Activated CD8-positive, alpha-beta memory T cell treated with anti-CD3 and anti-CD28 coated beads, Interleukin-2, amount 10 ng/mL, durations not matched to agents 7 days and 5 days (primary cell): ENCODE measurements at regions of chr1 and their contacts with region 1.

Region 1: DNA sequence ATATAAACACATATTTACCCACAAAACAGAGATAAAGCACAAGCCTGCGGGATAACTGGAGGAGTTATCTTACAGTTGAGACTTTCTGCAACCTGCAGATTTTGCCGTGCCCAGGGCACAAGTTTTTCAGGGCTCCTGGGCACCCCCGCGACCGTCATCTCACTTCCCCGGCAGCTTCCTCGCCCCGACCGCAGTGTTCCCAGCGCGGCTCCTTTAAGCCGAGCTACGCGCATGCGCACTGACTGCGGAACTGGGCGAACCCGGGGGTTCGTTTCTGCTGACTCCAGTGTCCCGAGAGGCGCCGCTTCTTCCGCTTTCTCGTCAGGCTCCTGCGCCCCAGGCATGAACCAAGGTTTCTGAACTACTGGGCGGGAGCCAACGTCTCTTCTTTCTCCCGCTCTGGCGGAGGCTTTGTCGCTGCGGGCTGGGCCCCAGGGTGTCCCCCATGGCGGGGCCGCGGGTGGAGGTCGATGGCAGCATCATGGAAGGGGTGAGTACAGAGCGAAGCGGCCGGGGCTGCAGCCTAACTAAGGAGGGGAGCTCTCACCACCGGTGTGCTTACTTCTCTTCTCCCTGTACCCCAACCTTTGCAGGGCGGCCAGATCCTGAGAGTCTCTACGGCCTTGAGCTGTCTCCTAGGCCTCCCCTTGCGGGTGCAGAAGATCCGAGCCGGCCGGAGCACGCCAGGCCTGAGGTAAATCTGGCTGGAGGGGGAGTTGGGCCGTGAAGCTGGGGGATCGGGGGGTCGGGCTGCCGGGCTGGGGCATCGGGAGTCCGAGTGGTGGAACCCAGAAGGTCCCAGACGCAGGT is at the start of gene RTCA:
- DNase-seq: peak; percentile 97
- ATAC-seq: peak; percentile 93
- H3K4me3 Mint-ChIP-seq: peak within 1 kb of the TSS; percentile 94
- H3K27ac Mint-ChIP-seq: peak within 1 kb of the TSS; percentile 96
- H3K4me1 Mint-ChIP-seq: peaks cover 37% of the 10 kb centered on the region
- H3K27me3 Mint-ChIP-seq: no peaks in the 10 kb centered on the region
- total RNA-seq, gene RTCA: 67.4 to 67.9 TPM

Region 2: GRCh38 chr1:100249537-100250257 is 16.4 kb before region 1 on chr1 and contains the start of gene DBT:
- CTCF ChIA-PET with region 1: interaction called, 21 read pairs
- DNase-seq: peak; percentile 97
- ATAC-seq: peak; percentile 100
- H3K4me3 Mint-ChIP-seq: no peak within 1 kb of the TSS
- H3K27ac Mint-ChIP-seq: peak within 1 kb of the TSS; percentile 17
- H3K4me1 Mint-ChIP-seq: peaks cover 13% of the 10 kb centered on the region
- H3K27me3 Mint-ChIP-seq: no peaks in the 10 kb centered on the region
- total RNA-seq, gene DBT: 11.2 to 13.2 TPM